IMR-90 (cell line): ENCODE measurements at regions of chr9 and their contacts with region 1.

Region 1: GRCh38 chr9:76240578-76240977 is 153.6 kb downstream of the RFK start:
- DNase-seq: no peak
- ATAC-seq: no peak
- H3K4me3 ChIP-seq: no peak overlapping the region
- H3K27ac ChIP-seq: no peak overlapping the region
- H3K4me1 ChIP-seq: no peaks in the 10 kb centered on the region
- H3K27me3 ChIP-seq: peaks cover 6% of the 10 kb centered on the region; the same call in 1 of the 2 replicates
- CTCF ChIP-seq: no peak
- POLR2A ChIP-seq: no peak
- RAD21 ChIP-seq: no peak

Region 2: DNA sequence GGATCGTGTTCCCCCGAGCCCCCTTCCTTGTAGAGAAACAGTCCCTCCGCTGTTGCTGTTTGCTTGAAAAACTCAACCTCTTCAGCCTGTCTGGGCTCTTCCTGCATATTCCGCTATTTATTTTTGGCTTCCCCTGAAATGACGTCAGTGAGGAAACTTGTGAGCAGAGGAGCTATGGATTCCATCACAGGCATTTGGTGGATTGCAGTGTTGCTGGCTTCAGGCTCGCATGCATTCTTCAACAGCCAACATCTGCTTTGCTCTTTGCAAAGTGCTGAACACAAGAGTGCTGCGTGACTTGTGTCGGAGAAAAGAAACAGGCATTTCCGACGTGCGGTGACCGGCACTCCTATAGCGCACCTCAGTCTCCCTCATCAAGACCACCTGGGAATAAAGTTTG is 79.0 kb before region 1 on chr9:
- CTCF ChIA-PET with region 1: no interaction called
- POLR2A ChIA-PET with region 1: no interaction called
- dilution Hi-C with region 1: no loop called
- in situ Hi-C with region 1: no loop called
- intact Hi-C with region 1: no loop called
- DNase-seq: peak; percentile 95
- ATAC-seq: peak; percentile 82
- H3K4me3 ChIP-seq: no peak overlapping the region
- H3K27ac ChIP-seq: peak overlapping the region; percentile 65; the same call in 1 of the 2 replicates
- H3K4me1 ChIP-seq: peaks cover 19% of the 10 kb centered on the region
- H3K27me3 ChIP-seq: no peaks in the 10 kb centered on the region
- CTCF ChIP-seq: no peak
- POLR2A ChIP-seq: no peak
- RAD21 ChIP-seq: no peak

Region 3: DNA sequence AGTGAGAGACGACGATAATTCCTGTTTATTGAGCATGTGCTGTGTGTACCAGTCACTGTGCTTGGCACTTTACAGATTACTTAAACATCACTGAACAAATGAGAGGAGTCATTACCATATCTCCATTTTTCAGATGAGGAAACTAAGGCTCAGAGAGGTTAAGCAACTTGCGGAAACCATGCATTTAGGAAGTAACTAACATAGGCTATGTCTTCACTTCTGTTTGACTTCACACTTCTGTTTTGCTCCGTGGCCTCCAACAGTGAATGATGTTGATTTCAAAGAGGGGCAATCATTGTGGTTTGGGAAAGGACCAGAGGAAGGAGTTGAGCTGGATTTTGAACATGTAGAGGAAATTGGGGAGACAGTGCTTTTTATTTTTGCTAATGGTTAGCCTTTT is 235.1 kb after region 1 on chr9:
- CTCF ChIA-PET with region 1: no interaction called
- POLR2A ChIA-PET with region 1: no interaction called
- dilution Hi-C with region 1: no loop called
- in situ Hi-C with region 1: no loop called
- intact Hi-C with region 1: loop called (anchors 5 kb)
- DNase-seq: no peak
- ATAC-seq: no peak
- H3K4me3 ChIP-seq: no peak overlapping the region
- H3K27ac ChIP-seq: no peak overlapping the region
- H3K4me1 ChIP-seq: no peaks in the 10 kb centered on the region
- H3K27me3 ChIP-seq: no peaks in the 10 kb centered on the region
- CTCF ChIP-seq: no peak
- POLR2A ChIP-seq: no peak
- RAD21 ChIP-seq: no peak

Region 4: GRCh38 chr9:76512826-76513225 is 272.2 kb after region 1 on chr9:
- CTCF ChIA-PET with region 1: no interaction called
- POLR2A ChIA-PET with region 1: no interaction called
- dilution Hi-C with region 1: no loop called
- in situ Hi-C with region 1: no loop called
- intact Hi-C with region 1: no loop called
- DNase-seq: peak; percentile 71
- ATAC-seq: peak; percentile 88
- H3K4me3 ChIP-seq: no peak overlapping the region
- H3K27ac ChIP-seq: no peak overlapping the region
- H3K4me1 ChIP-seq: no peaks in the 10 kb centered on the region
- H3K27me3 ChIP-seq: no peaks in the 10 kb centered on the region
- CTCF ChIP-seq: no peak
- POLR2A ChIP-seq: no peak
- RAD21 ChIP-seq: no peak